HEK293 (cell line): ENCODE measurements at regions of chr6 and their contacts with region 1.

Region 1: DNA sequence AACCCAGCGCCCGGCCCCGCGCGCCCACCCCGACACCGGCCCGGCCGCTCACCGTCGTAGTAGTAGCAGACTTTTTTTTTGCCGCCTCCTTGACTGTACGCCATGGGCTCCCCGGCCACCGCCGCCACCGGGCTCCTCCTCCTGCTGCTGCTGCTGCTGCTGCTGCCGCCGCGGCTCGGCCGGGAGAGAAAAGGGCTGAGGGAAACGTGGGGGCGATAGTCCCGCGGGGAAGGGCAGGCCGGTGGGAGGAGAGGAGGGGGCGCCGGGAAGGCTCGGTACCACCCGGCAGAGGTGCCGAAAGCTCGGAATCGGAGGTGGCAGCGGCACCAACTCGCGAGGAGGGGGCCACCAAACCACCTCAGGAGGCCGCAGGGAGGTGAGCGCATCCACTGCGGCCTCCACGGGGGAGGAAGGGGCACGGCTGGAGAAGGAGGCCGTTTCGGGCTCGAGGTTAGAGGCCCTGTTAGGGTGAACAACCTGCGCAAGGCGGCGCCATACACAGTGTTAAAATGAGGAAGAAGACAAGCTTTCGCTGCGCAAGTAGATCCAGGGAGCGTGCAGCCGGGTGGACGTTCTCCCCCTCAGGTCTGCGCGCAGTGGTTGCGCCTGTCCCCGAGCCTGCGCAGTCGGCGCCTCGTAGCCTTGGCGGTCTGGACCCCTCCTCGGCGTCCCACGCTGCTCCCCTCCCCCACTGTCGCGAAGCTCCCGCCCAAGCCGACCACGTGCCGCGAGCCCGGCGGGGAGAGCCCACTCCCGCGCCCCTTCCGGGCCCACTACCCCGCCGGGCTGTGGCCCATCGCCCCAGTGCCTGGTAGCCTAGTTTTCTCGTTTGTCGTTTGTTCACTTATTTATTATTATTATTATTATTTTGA is at the start of gene HDAC2:
- H3K4me3 ChIP-seq: peak within 1 kb of the TSS; percentile 96
- H3K27ac ChIP-seq: peak within 1 kb of the TSS; percentile 90
- H3K4me1 ChIP-seq: peaks cover 9% of the 10 kb centered on the region
- CTCF ChIP-seq: peak; percentile 82

Region 2: DNA sequence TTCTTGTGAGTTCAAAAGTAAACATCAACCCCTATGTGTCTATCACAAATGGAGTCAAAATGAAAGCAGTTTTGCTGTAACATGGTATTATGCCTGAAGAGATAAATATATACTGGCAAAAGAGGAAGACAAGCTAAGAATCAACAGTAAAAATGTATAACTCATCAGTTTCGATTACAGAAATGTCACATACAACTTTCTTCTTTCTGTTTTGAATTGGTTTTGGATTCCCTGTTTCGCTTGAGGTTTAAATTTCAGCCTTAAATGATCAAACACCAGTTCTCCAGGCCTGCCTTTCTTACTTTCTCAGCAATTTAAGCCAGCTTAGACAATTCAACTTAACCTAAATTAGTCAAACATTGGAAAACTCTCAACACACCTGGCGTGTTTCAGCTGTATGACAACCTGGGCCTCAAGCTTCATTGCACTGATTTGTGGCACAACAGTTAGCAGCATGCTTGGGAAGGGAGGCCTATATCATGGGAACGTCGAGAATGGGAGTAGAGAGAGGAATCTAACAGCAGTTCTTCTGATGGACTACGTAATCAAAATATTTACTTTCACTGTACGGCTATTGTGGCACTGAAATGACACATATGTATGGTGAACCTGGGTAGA is 165.8 kb before region 1 on chr6:
- CTCF ChIA-PET with region 1: no interaction called
- POLR2A ChIA-PET with region 1: no interaction called
- H3K4me3 ChIP-seq: no peak overlapping the region
- H3K27ac ChIP-seq: no peak overlapping the region
- H3K4me1 ChIP-seq: no peaks in the 10 kb centered on the region
- CTCF ChIP-seq: no peak

Region 3: GRCh38 chr6:113980937-113981554 is 10.0 kb after region 1 on chr6:
- CTCF ChIA-PET with region 1: interaction called, 10 read pairs
- POLR2A ChIA-PET with region 1: interaction called, 3 read pairs
- H3K4me3 ChIP-seq: no peak overlapping the region
- H3K27ac ChIP-seq: no peak overlapping the region
- H3K4me1 ChIP-seq: no peaks in the 10 kb centered on the region
- CTCF ChIP-seq: no peak

Region 4: GRCh38 chr6:114284281-114284680 is 313.2 kb after region 1 on chr6:
- CTCF ChIA-PET with region 1: no interaction called
- POLR2A ChIA-PET with region 1: no interaction called
- H3K4me3 ChIP-seq: no peak overlapping the region
- H3K27ac ChIP-seq: no peak overlapping the region
- H3K4me1 ChIP-seq: no peaks in the 10 kb centered on the region
- CTCF ChIP-seq: no peak